HepG2 (cell line): ENCODE measurements at regions of chr16 and their contacts with region 1.

Region 1: DNA sequence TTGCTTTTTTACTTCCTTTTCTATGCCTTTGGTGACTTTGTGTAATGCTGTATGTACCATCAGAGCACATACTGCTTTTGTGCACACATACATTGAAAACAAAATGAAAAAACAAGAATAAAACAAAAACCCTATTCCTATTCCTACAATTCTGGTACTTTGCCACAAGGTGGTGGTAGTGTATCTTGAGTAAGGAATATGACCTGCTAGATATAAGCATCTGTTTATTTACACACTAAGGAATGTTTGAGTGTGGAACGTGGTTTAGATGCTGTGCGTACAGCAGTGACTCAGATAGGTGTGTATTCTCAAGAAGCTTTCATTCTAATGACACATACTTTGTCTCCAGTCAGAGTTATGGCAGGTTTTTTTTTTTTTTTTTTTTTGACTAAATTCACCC is 606.2 kb downstream of the WWOX start:
- DNase-seq: peak; percentile 82
- ATAC-seq: peak; percentile 91
- H3K4me3 ChIP-seq: no peak overlapping the region
- H3K27ac ChIP-seq: no peak overlapping the region
- H3K4me1 ChIP-seq: peaks cover 20% of the 10 kb centered on the region
- H3K27me3 ChIP-seq: no peaks in the 10 kb centered on the region
- CTCF ChIP-seq: peak; percentile 89
- EP300 ChIP-seq: peak in 1 of 2 experiments; percentile 4; a peak in 1 of 4 replicates
- POLR2A ChIP-seq: no peak
- RAD21 ChIP-seq: peak; percentile 87

Region 2: GRCh38 chr16:78122774-78123315 is 582.8 kb before region 1 on chr16:
- CTCF ChIA-PET with region 1: no interaction called
- POLR2A ChIA-PET with region 1: no interaction called
- in situ Hi-C with region 1: no loop called
- intact Hi-C with region 1: loop called (anchors 2 kb)
- DNase-seq: peak; percentile 75
- ATAC-seq: peak; percentile 86
- H3K4me3 ChIP-seq: peak overlapping the region in 1 of 3 experiments; percentile 25; a peak in 2 of 6 replicates
- H3K27ac ChIP-seq: peak overlapping the region; percentile 33
- H3K4me1 ChIP-seq: peaks cover 37% of the 10 kb centered on the region
- H3K27me3 ChIP-seq: no peaks in the 10 kb centered on the region
- CTCF ChIP-seq: peak; percentile 61
- EP300 ChIP-seq: no peak
- POLR2A ChIP-seq: no peak
- RAD21 ChIP-seq: peak; percentile 70

Region 3: GRCh38 chr16:78503602-78504001 is 202.1 kb before region 1 on chr16:
- CTCF ChIA-PET with region 1: no interaction called
- POLR2A ChIA-PET with region 1: interaction called, 5 read pairs
- in situ Hi-C with region 1: no loop called
- intact Hi-C with region 1: loop called (anchors 1 kb)
- DNase-seq: peak; percentile 61
- ATAC-seq: no peak
- H3K4me3 ChIP-seq: no peak overlapping the region
- H3K27ac ChIP-seq: no peak overlapping the region
- H3K4me1 ChIP-seq: peaks cover 67% of the 10 kb centered on the region
- H3K27me3 ChIP-seq: no peaks in the 10 kb centered on the region
- CTCF ChIP-seq: peak; percentile 71
- EP300 ChIP-seq: no peak
- POLR2A ChIP-seq: no peak
- RAD21 ChIP-seq: peak; percentile 70

Region 4: DNA sequence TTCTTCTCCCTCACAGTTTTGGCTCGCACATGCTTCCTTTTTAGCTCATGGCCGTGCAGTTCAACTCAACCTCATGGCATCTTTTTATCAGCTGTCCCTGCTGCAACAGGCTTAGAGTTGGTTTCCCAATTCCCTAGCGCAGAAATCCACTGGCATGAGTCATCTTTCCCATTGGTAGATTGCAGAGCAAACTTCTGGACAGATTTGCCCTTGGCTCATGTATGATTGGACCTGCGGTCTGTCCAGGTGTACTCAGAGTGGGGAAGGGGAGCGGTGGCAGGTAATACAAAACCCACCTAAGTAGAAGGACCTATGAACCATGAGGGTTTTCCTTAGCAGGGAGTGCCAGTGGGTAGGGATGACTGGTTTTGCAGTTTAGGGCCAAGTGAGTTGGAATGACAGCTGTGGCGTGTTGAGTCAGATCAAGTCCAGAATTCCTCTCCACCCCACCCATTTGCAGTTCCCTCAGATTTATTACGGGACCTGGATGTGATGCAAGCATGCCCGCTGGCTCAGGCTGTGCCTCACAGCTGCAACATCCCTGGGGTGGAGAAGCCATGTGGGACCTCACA is 21.6 kb before region 1 on chr16:
- CTCF ChIA-PET with region 1: no interaction called
- POLR2A ChIA-PET with region 1: no interaction called
- in situ Hi-C with region 1: no loop called
- intact Hi-C with region 1: no loop called
- DNase-seq: peak; percentile 51
- ATAC-seq: peak; percentile 73
- H3K4me3 ChIP-seq: no peak overlapping the region
- H3K27ac ChIP-seq: no peak overlapping the region
- H3K4me1 ChIP-seq: peaks cover 17% of the 10 kb centered on the region
- H3K27me3 ChIP-seq: no peaks in the 10 kb centered on the region
- CTCF ChIP-seq: no peak
- EP300 ChIP-seq: no peak
- POLR2A ChIP-seq: no peak
- RAD21 ChIP-seq: no peak

Region 5: DNA sequence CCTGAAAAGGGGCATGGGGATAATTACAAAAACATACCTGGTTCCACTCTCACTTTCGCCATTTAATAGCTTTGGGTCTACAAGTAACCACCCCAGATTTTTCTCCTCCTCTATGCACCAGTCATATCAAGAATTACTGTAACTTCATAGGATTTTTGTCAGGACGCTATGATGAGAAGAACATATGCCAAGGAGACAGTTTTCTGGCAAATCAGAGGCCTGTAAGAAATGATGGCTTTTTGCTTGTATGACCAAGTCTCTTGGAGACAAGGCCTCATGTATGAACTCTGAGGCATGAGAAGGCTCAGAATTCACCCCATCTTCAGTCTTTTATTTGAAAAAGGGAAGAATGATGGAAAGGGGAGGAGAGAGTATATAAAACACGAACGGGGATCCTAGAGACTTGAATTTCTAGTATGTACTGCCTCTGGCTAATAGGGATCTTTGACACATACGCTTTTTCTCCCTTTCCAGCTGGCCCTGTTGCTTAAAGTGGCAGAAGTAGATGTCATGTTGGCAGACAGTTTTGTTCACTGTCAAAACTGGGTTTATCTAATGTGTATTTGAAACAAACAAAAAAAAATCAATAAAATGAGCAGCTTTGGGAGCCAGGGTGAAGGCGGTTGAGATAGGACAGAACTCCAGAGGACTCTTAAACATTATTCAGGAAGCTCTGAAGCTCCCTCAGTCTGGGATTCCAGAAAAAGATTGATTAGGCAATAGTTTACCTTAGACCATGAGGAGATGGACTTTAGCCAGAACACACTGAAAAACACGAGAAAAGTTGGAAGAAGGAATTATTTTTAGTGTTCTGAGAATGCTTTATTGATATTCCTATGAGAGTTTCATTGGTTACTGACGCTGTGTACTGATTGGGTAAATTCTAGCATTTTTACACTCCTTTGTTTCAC is 50.3 kb after region 1 on chr16:
- CTCF ChIA-PET with region 1: no interaction called
- POLR2A ChIA-PET with region 1: no interaction called
- in situ Hi-C with region 1: no loop called
- intact Hi-C with region 1: loop called (anchors 1 kb)
- DNase-seq: peak; percentile 69
- ATAC-seq: peak; percentile 93
- H3K4me3 ChIP-seq: peak overlapping the region in 1 of 3 experiments; percentile 3; a peak in 1 of 6 replicates
- H3K27ac ChIP-seq: peak overlapping the region; percentile 47
- H3K4me1 ChIP-seq: peaks cover 24% of the 10 kb centered on the region
- H3K27me3 ChIP-seq: no peaks in the 10 kb centered on the region
- CTCF ChIP-seq: no peak
- EP300 ChIP-seq: peak in 1 of 2 experiments; percentile 80; a peak in 2 of 4 replicates
- POLR2A ChIP-seq: no peak
- RAD21 ChIP-seq: no peak

Region 6: GRCh38 chr16:78925083-78925767 is 219.5 kb after region 1 on chr16:
- CTCF ChIA-PET with region 1: interaction called, 4 read pairs
- POLR2A ChIA-PET with region 1: no interaction called
- in situ Hi-C with region 1: no loop called
- intact Hi-C with region 1: loop called (anchors 5 kb)
- DNase-seq: peak; percentile 24
- ATAC-seq: peak; percentile 95
- H3K4me3 ChIP-seq: no peak overlapping the region
- H3K27ac ChIP-seq: no peak overlapping the region
- H3K4me1 ChIP-seq: peaks cover 6% of the 10 kb centered on the region; the same call in 1 of the 2 replicates
- H3K27me3 ChIP-seq: no peaks in the 10 kb centered on the region
- CTCF ChIP-seq: peak; percentile 63
- EP300 ChIP-seq: no peak
- POLR2A ChIP-seq: no peak
- RAD21 ChIP-seq: peak; percentile 59; the same call in 1 of the 2 replicates

Region 7: GRCh38 chr16:79261481-79261940 is 555.8 kb after region 1 on chr16:
- CTCF ChIA-PET with region 1: interaction called, 5 read pairs
- POLR2A ChIA-PET with region 1: no interaction called
- in situ Hi-C with region 1: no loop called
- intact Hi-C with region 1: loop called (anchors 2 kb)
- DNase-seq: peak; percentile 21
- ATAC-seq: peak; percentile 96
- H3K4me3 ChIP-seq: no peak overlapping the region
- H3K27ac ChIP-seq: no peak overlapping the region
- H3K4me1 ChIP-seq: no peaks in the 10 kb centered on the region
- H3K27me3 ChIP-seq: 0 out of 5 replicates have a peak, but pooled peaks cover 0 to 5% of the 10 kb centered on the region in 2 experiments
- CTCF ChIP-seq: peak; percentile 80
- EP300 ChIP-seq: no peak
- POLR2A ChIP-seq: no peak
- RAD21 ChIP-seq: peak; percentile 50

Region 8: GRCh38 chr16:80526425-80527061 is 1820.8 kb after region 1 on chr16:
- CTCF ChIA-PET with region 1: no interaction called
- POLR2A ChIA-PET with region 1: no interaction called
- in situ Hi-C with region 1: no loop called
- intact Hi-C with region 1: loop called (anchors 5 kb)
- DNase-seq: peak; percentile 60
- ATAC-seq: peak; percentile 68
- H3K4me3 ChIP-seq: no peak overlapping the region
- H3K27ac ChIP-seq: no peak overlapping the region
- H3K4me1 ChIP-seq: no peaks in the 10 kb centered on the region
- H3K27me3 ChIP-seq: no peaks in the 10 kb centered on the region
- CTCF ChIP-seq: peak; percentile 84
- EP300 ChIP-seq: no peak
- POLR2A ChIP-seq: no peak
- RAD21 ChIP-seq: 0 out of 2 replicates have a peak, but pooled peaks have one; percentile 14